Right ventricle myocardium inferior (tissue), 1 donor: ENCODE measurements at regions of chr20 and their contacts with region 1.

Region 1: DNA sequence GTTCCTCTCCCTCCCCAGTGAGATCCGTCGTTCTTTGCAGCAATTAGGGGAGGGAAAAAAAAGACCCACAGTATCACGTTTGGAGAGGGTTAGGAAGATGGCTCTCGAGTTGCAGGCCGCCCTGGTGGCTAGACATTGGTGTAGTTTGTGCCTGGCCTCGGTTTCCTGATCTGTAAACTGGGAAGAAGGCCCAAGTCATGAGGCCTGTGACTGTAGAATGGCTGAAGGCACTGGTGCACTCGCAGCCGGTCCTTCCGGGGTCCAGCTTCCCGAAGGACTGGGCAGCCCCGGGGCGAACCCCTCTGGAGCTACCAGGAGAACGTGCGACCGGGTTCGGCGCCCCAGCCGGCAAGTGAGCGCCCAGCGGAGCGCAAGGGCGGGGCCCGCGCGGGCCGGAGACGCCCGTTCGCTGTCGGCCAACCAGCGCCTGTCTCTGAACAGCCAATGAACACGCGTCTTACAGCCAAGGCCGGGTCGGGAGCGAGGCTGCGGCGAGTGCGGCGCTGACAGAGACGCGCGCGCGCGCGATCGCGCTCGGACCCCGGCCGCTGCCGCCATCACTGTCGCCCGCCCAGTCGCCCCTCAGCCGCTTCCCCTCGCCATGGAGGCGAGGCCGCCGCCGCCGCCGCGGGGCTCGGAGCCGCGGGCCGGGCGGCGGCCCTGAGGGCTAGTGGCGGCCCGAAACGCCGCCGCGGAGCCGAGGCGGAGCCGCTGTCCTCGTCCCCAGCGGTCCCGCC is at the start of gene PTPRA:
- DNase-seq: peak; percentile 96
- ATAC-seq: peak; percentile 97
- total RNA-seq, gene PTPRA: 26.5 TPM

Region 2: DNA sequence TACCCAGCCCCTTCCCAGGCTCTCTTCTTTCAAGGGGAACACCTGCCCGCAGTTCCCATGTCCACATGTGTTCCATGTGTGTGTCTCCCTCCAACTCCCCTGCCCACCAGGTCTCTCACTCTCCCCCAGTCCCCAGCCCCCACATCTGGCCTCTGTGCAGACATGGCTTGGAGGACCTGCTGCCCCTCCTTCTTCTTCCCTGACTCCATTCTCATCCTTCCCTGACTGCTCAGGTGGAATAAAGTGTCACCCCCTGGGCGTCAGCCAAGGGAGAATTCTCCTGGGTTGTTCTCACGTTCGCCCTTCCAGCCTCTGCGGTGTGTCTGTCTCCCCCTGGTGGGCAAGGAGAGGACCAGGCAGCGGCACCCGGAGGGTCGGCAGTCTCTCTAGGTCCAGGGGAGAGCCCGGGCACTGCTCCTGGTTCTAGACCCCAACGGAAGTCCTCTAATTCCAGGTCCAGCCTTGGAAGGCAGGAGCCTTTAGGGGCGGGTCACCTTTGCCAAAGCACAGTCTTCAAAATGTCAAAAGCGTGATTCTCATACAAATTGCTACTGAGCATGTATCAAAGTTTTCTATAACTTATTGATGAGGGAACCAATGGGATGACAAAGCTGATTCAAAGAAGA is 130.1 kb before region 1 on chr20:
- intact Hi-C with region 1: no loop called
- DNase-seq: no peak
- ATAC-seq: peak; percentile 29

Region 3: GRCh38 chr20:2840138-2840966 is 32.8 kb before region 1 on chr20 and contains the starts of genes PCED1A and VPS16:
- intact Hi-C with region 1: loop called (anchors 2 kb)
- DNase-seq: peak; percentile 92
- ATAC-seq: peak; percentile 98
- total RNA-seq, gene PCED1A: 10.7 TPM
- total RNA-seq, gene VPS16: 18.0 TPM

Region 4: GRCh38 chr20:2984956-2985661 is 111.9 kb after region 1 on chr20:
- intact Hi-C with region 1: loop called (anchors 10 kb)
- DNase-seq: no peak
- ATAC-seq: no peak